Activated T-helper 1 cell treated with anti-CD3 and anti-CD28 coated beads, Interleukin-12 subunit alpha, Interleukin-12 subunit beta, Interleukin-2, Interleukin-4 antibody, amounts not matched to agents 30 ng/mL and 10 ng/mL and 1 ng/mL, durations not matched to agents 14 hours and 24 hours and 36 hours (primary cell): ENCODE measurements at regions of chr10 and their contacts with region 1.

Region 1: GRCh38 chr10:32378363-32379317 is 31.7 kb upstream of the EPC1 start:
- DNase-seq: peak; percentile 88
- H3K4me3 Mint-ChIP-seq: no peak overlapping the region
- H3K27ac Mint-ChIP-seq: no peak overlapping the region
- H3K4me1 Mint-ChIP-seq: peaks cover 26% of the 10 kb centered on the region
- H3K27me3 Mint-ChIP-seq: no peaks in the 10 kb centered on the region

Region 2: DNA sequence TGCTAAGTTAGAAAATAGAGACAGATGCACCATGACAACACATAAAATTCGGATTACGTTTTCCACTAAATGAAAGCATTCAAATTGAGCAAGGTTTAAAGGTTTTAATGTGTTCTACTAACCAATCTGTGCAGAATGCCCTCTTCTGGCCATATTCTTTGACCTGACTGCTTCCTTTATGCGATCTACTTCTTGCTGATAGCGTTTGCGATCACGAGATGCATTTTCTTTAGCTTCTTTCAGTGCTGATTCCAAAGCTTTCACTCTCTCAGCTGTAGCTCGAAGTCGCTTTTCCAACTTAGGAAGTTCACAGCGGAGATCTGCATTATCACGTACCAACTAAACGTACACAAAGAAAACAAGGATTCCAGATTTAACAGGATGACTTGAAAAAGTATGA is 361.6 kb before region 1 on chr10:
- intact Hi-C with region 1: no loop called
- DNase-seq: no peak
- H3K4me3 Mint-ChIP-seq: no peak overlapping the region
- H3K27ac Mint-ChIP-seq: no peak overlapping the region
- H3K4me1 Mint-ChIP-seq: no peaks in the 10 kb centered on the region
- H3K27me3 Mint-ChIP-seq: no peaks in the 10 kb centered on the region

Region 3: DNA sequence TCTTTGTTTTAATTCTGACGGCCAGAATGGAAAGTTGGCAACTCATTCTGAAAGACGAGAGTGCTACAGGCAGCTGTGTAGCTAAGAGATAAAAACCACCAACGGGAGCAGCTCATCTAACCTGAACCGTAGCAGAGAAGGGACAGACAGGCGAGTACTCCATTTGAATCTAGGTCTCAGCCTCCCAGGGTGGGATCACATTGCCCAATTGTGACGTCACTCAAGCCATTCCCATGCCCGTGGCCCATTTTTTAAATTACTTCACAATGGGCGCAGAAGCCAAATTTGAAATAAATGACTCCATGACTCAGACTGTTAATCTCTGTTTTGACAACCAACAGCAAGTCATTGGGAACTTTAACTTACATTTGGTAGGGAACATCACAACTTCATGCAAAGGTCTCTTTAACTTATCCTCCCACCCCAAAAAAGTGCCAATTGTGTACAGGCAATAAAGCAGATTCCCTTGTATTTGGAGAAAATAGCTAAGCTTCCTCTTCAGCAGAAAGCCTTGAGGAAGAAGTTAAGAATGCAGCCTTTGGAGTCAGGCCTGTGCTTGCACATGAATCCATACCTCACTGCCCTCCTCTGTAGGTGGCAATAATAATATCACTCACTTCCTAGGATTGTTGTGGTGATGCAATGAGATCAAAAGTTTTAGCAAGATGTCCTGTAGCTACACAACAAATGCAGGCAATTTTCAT is 229.2 kb before region 1 on chr10:
- intact Hi-C with region 1: loop called (anchors 2 kb)
- DNase-seq: peak; percentile 36
- H3K4me3 Mint-ChIP-seq: peak overlapping the region; percentile 45
- H3K27ac Mint-ChIP-seq: peak overlapping the region; percentile 94
- H3K4me1 Mint-ChIP-seq: peaks cover 41% of the 10 kb centered on the region
- H3K27me3 Mint-ChIP-seq: no peaks in the 10 kb centered on the region

Region 4: DNA sequence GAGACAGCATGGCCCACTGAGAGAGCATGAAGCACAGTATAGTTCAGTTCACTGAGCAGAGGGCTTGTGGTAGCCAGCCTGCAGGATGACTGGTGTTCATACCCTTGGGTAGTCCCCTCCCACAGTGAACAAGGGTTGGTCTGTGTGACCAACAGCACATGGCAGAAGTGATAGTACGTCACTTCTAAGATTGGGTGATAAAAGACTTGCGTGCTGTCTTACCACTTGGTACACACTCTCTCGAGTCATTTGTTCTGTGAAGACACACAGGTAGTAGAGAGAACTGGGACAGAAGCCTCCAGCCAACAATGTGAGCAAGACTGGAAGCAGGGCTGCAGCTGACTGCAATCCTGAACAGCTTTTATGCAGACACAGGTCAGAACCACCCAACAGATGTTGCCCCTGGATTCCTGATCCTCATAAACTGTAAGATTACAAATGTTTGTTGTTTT is 46.3 kb before region 1 on chr10:
- intact Hi-C with region 1: loop called (anchors 1 kb)
- DNase-seq: peak; percentile 71
- H3K4me3 Mint-ChIP-seq: peak overlapping the region; percentile 80
- H3K27ac Mint-ChIP-seq: peak overlapping the region; percentile 97
- H3K4me1 Mint-ChIP-seq: peaks cover 93% of the 10 kb centered on the region
- H3K27me3 Mint-ChIP-seq: no peaks in the 10 kb centered on the region

Region 5: GRCh38 chr10:32445740-32446535 is 67.3 kb after region 1 on chr10 and contains the start of gene CCDC7:
- intact Hi-C with region 1: loop called (anchors 1 kb)
- DNase-seq: peak; percentile 83
- H3K4me3 Mint-ChIP-seq: peak within 1 kb of the TSS; percentile 98
- H3K27ac Mint-ChIP-seq: peak within 1 kb of the TSS; percentile 96
- H3K4me1 Mint-ChIP-seq: peaks cover 9% of the 10 kb centered on the region
- H3K27me3 Mint-ChIP-seq: peaks cover 3% of the 10 kb centered on the region
- total RNA-seq, gene CCDC7: 9.0 and 10.2 TPM in 2 replicates

Region 6: GRCh38 chr10:33120700-33121099 is 742.1 kb after region 1 on chr10:
- intact Hi-C with region 1: loop called (anchors 1 kb)
- DNase-seq: no peak
- H3K4me3 Mint-ChIP-seq: peak overlapping the region; percentile 2
- H3K27ac Mint-ChIP-seq: peak overlapping the region; percentile 57
- H3K4me1 Mint-ChIP-seq: peaks cover 45% of the 10 kb centered on the region
- H3K27me3 Mint-ChIP-seq: no peaks in the 10 kb centered on the region